Transverse colon (tissue), 4 donors: ENCODE measurements at regions of chr17 and their contacts with region 1.

Region 1: GRCh38 chr17:21511363-21512198 is 135.4 kb downstream of the KCNJ12 start:
- DNase-seq: peak; percentile 85
- H3K4me3 ChIP-seq: peak overlapping the region; percentile 34 to 70 (median 40)
- H3K27ac ChIP-seq: peak overlapping the region; percentile 45 to 55 (median 53)
- H3K4me1 ChIP-seq: peaks cover 0 to 20% (median 4%) of the 10 kb centered on the region in 4 donors
- H3K27me3 ChIP-seq: peaks cover 7% of the 10 kb centered on the region
- CTCF ChIP-seq: peak; percentile 69 to 82 (median 73)
- EP300 ChIP-seq: no peak
- POLR2A ChIP-seq: no peak

Region 2: GRCh38 chr17:21119247-21119918 is 392.2 kb before region 1 on chr17:
- in situ Hi-C with region 1: loop called in 3 of 4 experiments (anchors 10 to 25 kb)
- intact Hi-C with region 1: loop called (anchors 2 kb)
- DNase-seq: peak; percentile 74
- H3K4me3 ChIP-seq: peak overlapping the region in 1 of 4 donors; percentile 16
- H3K27ac ChIP-seq: peak overlapping the region in 2 of 4 donors; percentile 30 to 58
- H3K4me1 ChIP-seq: peaks cover 0 to 10% (median 3%) of the 10 kb centered on the region in 4 donors
- H3K27me3 ChIP-seq: no peaks in the 10 kb centered on the region
- CTCF ChIP-seq: peak; percentile 74 to 83 (median 79)
- EP300 ChIP-seq: no peak
- POLR2A ChIP-seq: no peak

Region 3: GRCh38 chr17:21252796-21253645 is 258.6 kb before region 1 on chr17 and contains the start of gene NATD1:
- in situ Hi-C with region 1: loop called in 1 of 4 experiments (anchors 25 kb)
- intact Hi-C with region 1: no loop called
- DNase-seq: peak; percentile 88
- H3K4me3 ChIP-seq: peak within 1 kb of the TSS; percentile 59 to 91 (median 70)
- H3K27ac ChIP-seq: peak within 1 kb of the TSS; percentile 60 to 72 (median 64)
- H3K4me1 ChIP-seq: peaks cover 4 to 22% (median 18%) of the 10 kb centered on the region in 4 donors
- H3K27me3 ChIP-seq: no peaks in the 10 kb centered on the region
- CTCF ChIP-seq: no peak
- EP300 ChIP-seq: no peak
- POLR2A ChIP-seq: peak; percentile 20
- total RNA-seq, gene NATD1: 1.4 to 7.9 (median 5.0) TPM

Region 4: DNA sequence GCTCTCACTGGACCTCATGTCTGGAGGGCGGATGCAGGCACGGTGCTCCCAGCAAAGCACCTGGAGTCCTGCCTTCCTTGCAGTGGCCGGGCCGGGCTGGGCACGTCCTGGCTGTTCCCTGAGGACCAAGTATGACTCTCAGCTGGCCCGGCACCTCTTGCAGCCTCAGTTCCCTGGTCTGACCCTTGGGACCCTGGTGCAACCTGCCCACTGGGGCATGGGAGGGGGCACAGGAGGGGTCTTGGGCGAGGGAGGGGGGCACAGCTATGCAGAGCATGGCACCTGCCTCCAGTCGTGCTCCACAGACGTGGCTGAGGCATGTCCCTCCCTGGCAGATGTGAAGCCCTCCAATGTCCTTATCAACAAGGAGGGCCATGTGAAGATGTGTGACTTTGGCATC is 207.5 kb before region 1 on chr17:
- in situ Hi-C with region 1: loop called in 1 of 4 experiments (anchors 25 kb)
- intact Hi-C with region 1: no loop called
- DNase-seq: peak; percentile 6
- H3K4me3 ChIP-seq: no peak overlapping the region
- H3K27ac ChIP-seq: no peak overlapping the region
- H3K4me1 ChIP-seq: no peaks in the 10 kb centered on the region
- H3K27me3 ChIP-seq: no peaks in the 10 kb centered on the region
- CTCF ChIP-seq: no peak
- EP300 ChIP-seq: no peak
- POLR2A ChIP-seq: no peak

Region 5: DNA sequence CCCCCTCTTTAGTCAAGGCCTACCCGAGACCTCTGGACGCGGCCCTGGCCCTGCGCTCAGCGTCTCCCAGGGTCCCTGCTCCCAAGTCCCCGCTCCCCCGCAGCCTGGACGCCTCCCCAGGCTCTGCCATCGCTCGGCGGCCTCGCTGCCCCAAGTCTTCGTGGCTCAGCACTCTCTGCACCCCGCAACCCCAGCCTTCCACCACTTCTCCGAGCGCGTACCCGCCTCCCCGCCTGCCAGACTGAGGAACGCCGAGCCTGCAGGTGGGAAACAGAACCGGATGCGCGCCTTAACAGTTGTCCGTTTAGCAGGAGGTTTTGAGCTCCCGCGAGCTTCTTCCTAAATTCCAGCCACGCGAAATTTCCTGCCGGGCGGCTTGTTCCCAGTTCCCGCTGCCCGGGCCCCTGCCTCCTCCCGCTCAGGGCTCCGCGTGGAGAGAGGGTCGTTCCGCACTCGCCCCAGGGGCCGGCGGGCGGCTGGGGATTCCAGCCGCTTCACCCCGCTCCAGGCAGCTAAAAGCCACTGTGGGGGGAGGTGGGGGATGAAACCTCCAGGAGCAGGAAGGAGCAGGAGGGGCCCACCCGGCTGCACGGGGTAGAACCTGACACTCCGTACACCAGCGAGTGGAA is 47.7 kb before region 1 on chr17:
- in situ Hi-C with region 1: loop called in 2 of 4 experiments (anchors 5 to 10 kb)
- intact Hi-C with region 1: loop called (anchors 2 kb)
- DNase-seq: no peak
- H3K4me3 ChIP-seq: no peak overlapping the region
- H3K27ac ChIP-seq: no peak overlapping the region
- H3K4me1 ChIP-seq: peaks cover 0 to 5% (median 0%) of the 10 kb centered on the region in 4 donors
- H3K27me3 ChIP-seq: peaks cover 13% of the 10 kb centered on the region
- CTCF ChIP-seq: no peak
- EP300 ChIP-seq: no peak
- POLR2A ChIP-seq: no peak